Left cardiac atrium (tissue), 4 donors: ENCODE measurements at regions of chr3 and their contacts with region 1.

Region 1: DNA sequence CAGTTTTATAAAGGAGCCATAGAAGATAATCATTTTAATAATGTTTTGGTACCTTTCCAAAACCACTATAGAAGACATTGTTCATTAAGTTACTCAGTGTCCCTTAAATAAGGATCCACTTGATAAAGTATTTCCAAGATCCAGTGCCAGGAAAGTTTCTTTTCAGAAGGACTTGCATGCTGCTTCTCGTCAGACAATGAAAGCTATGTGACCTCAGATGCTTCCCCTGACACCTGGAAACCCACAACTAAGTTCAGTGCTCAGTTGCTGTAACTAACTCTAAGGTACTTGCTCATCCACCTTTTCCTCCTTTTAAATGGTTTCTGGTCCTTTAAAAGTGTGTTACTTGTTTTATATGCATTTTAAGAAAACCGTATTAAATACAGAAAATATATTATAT is 7.3 kb downstream of the SSR3 start:
- DNase-seq: no peak
- ATAC-seq: peak in 1 of 2 donors; percentile 22

Region 2: DNA sequence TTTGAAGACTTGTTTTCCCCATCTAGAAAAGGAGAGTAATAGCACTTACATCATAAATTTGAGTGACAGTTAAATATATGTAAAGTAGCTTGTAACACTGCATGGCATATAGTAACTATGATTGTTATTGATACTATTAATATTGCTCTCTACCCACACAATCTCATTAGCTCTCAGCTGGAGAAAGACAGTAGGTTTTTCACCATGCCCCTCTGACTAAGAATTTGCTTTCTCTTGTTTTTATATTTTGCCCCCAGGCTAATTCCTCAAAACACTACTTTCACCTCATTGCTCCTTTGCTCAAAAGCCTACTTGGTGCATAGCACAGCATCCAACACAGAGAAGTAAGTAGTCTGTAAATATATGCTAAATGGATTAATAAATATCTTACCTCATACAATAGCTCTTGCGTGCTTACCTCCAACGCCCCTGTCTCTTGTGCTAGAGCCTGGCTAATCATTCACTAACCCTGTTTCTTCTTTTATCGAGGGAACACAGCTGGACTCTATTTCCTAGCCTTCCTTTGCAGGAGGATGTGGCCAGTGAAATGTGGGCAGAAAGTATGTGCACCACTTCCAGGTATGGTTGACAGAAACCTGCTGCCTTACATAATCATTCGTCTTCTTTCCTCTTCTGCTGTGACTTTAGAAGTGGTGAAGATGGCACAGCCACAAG is 992.7 kb before region 1 on chr3:
- intact Hi-C with region 1: no loop called
- DNase-seq: no peak
- ATAC-seq: no peak

Region 3: GRCh38 chr3:157088601-157089454 is 541.2 kb after region 1 on chr3:
- intact Hi-C with region 1: loop called in 1 of 2 experiments (anchors 5 kb)
- DNase-seq: peak; percentile 96
- ATAC-seq: peak; percentile 87 to 88